ENCODE measurements at regions of chr17 and their contacts with region 1.

Region 1: DNA sequence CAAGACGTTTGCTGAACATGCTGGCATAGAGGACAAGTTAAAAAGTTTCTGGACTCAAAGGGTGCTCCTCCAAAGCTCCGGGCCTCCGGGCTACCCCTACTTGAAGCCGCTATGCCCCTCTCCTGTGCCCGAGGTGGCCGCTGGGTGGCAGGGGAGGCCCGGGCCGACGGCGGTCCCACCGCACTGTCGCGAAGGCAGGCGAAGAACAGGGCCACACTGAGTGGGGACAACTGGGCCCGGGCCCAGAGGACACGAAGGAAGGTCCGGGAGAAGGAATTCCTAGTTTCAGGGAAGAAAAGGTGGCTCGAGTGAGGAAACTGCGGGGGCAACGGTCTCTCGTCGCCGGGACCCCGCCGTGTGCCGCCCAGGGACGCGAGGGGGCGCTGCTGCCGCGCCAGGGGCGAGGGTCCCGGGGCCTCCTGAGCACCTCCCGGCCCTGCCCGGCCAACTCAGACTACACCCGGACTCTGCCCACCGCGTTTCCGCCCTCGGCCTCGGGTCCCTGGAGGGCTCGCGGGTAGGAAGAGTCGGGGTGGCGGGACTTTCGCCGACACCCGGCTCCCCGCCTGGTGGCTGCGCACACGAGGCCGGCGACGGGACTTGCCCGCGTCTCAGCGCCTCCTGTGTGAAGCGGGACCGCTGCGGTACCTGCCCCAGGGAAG is 885 bp upstream of the CHCT1 start:
- DNase-seq: peak; percentile 81 to 91
- ATAC-seq: peak; percentile 97 to 99
- H3K4me3 ChIP-seq: peak overlapping the region; percentile 44
- H3K27ac ChIP-seq: peak overlapping the region; percentile 76 to 87
- H3K4me1 ChIP-seq: peaks cover 3% of the 10 kb centered on the region; the same call in 1 of the 3 replicates
- CTCF ChIP-seq: peak; percentile 100
- EP300 ChIP-seq: no peak
- POLR2A ChIP-seq: peak; percentile 23; the same call in 1 of the 2 replicates
- RAD21 ChIP-seq: peak; percentile 66 to 89

Region 2: DNA sequence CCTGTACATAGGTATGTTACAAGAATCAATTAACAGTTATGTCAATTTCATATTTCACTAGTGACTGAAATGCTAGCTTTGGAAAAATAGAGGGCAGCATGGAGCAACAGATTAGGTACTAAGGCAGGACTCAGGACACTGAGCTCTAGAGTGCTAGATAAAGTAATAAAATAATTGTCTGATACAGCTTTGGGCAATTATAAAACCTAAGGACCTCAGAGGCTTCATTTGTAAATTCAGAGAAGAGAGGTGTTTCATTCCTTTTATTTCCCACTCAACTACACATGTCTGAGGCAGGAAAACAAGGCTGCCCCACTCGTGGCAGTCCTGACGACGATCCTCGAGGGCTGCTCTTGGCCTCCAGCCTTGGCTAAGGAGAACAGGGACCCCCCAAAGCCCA is 190.2 kb before region 1 on chr17:
- CTCF ChIA-PET with region 1: interaction called, 19 read pairs
- POLR2A ChIA-PET with region 1: no interaction called
- DNase-seq: peak; percentile 41 to 44
- ATAC-seq: peak; percentile 88 to 92
- H3K4me3 ChIP-seq: no peak overlapping the region
- H3K27ac ChIP-seq: no peak overlapping the region
- H3K4me1 ChIP-seq: peaks cover 6% of the 10 kb centered on the region; the same call in 1 of the 3 replicates
- CTCF ChIP-seq: peak; percentile 68
- EP300 ChIP-seq: no peak
- POLR2A ChIP-seq: no peak
- RAD21 ChIP-seq: peak; percentile 68 to 72

Region 3: DNA sequence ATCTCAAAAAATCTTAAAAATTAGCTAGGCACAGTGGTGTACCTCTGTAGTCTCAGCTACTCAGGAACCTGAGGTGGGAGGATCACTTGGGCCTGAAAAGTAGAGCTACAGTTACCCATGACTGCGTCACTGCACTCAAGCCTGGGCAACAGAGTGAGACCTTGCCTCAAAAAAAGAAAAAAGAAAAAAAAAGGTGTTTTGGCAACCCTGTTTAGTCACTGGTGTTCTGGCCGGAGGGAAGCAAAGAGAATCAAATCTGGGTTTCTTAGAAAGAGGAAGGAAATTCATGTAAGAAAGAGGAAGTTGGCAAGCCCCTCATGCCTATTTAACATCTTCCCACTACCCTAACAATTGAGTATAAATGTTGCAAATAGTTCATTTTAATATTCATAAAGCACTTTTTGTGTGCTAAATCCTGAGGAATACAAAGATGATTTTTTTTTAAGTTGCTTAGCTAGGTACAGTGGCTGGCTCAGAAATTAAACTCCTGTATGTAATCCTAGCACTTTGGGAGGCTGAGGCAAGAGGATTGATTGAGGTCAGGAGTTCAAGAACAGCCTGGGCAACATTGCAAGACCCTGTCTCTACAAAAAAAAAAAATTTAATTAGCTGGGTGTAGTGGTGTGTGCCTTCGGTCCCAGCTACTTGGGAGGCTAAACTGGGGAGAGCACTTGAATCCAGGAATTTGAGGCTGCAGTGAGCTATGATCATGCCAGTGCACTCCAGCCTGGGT is 23.0 kb before region 1 on chr17:
- CTCF ChIA-PET with region 1: interaction called, 22 read pairs
- POLR2A ChIA-PET with region 1: interaction called, 8 read pairs
- DNase-seq: no peak
- ATAC-seq: no peak
- H3K4me3 ChIP-seq: no peak overlapping the region
- H3K27ac ChIP-seq: no peak overlapping the region
- H3K4me1 ChIP-seq: peaks cover 3% of the 10 kb centered on the region
- CTCF ChIP-seq: no peak
- EP300 ChIP-seq: no peak
- POLR2A ChIP-seq: no peak
- RAD21 ChIP-seq: no peak

Region 4: DNA sequence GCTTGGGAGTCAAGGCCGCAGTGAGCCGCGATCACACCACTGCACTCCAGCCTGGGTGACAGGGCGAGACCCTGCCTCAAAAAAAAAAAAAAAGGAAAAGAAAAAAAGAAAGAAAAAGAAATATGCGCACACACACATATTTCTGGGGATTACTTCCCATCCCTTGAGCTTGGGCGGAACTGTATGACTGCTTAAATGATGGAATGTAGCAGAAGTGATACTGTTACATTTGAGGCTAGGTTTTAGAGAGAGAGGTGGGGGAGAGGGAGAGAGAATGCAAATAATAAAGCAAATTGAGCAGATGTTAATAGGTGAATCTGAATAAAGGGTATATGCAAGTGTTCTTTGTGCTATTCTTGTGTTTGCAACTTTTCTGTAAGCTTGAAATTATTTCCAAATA is 17.4 kb before region 1 on chr17:
- CTCF ChIA-PET with region 1: interaction called, 60 read pairs
- POLR2A ChIA-PET with region 1: no interaction called
- DNase-seq: no peak
- ATAC-seq: no peak
- H3K4me3 ChIP-seq: no peak overlapping the region
- H3K27ac ChIP-seq: no peak overlapping the region
- H3K4me1 ChIP-seq: no peaks in the 10 kb centered on the region
- CTCF ChIP-seq: no peak
- EP300 ChIP-seq: no peak
- POLR2A ChIP-seq: no peak
- RAD21 ChIP-seq: no peak

Region 5: GRCh38 chr17:60431501-60431900 is 10.1 kb after region 1 on chr17:
- CTCF ChIA-PET with region 1: interaction called, 26 read pairs
- POLR2A ChIA-PET with region 1: no interaction called
- DNase-seq: no peak
- ATAC-seq: no peak
- H3K4me3 ChIP-seq: no peak overlapping the region
- H3K27ac ChIP-seq: no peak overlapping the region
- H3K4me1 ChIP-seq: no peaks in the 10 kb centered on the region
- CTCF ChIP-seq: no peak
- EP300 ChIP-seq: no peak
- POLR2A ChIP-seq: no peak
- RAD21 ChIP-seq: no peak

Region 6: GRCh38 chr17:60508384-60508970 is 87.1 kb after region 1 on chr17:
- CTCF ChIA-PET with region 1: no interaction called
- POLR2A ChIA-PET with region 1: no interaction called
- DNase-seq: no peak
- ATAC-seq: no peak
- H3K4me3 ChIP-seq: no peak overlapping the region
- H3K27ac ChIP-seq: no peak overlapping the region
- H3K4me1 ChIP-seq: peaks cover 26% of the 10 kb centered on the region
- CTCF ChIP-seq: no peak
- EP300 ChIP-seq: no peak
- POLR2A ChIP-seq: no peak
- RAD21 ChIP-seq: no peak